ENCODE measurements at regions of chr17 and their contacts with region 1.

Region 1: GRCh38 chr17:74659898-74660297 is 36.4 kb upstream of the CD300E start:
- DNase-seq: no peak
- H3K4me3 ChIP-seq: no peak overlapping the region
- H3K27ac ChIP-seq: no peak overlapping the region
- H3K4me1 ChIP-seq: no peaks in the 10 kb centered on the region
- H3K27me3 ChIP-seq: no peaks in the 10 kb centered on the region
- CTCF ChIP-seq: no peak

Region 2: GRCh38 chr17:74736513-74737298 is 76.8 kb after region 1 on chr17 and contains the start of gene RAB37:
- intact Hi-C with region 1: loop called (anchors 10 kb)
- DNase-seq: peak; percentile 58
- H3K4me3 ChIP-seq: peak within 1 kb of the TSS; percentile 35
- H3K27ac ChIP-seq: peak within 1 kb of the TSS; percentile 23
- H3K4me1 ChIP-seq: peaks cover 17% of the 10 kb centered on the region
- H3K27me3 ChIP-seq: peaks cover 19% of the 10 kb centered on the region
- CTCF ChIP-seq: peak; percentile 37
- total RNA-seq, gene RAB37: 4.5 to 7.2 TPM

Measured in colonic mucosa (tissue), 4 donors.